Caco-2 (cell line): ENCODE measurements at regions of chr11 and their contacts with region 1.

Region 1: GRCh38 chr11:35485656-35486322 is 39.6 kb downstream of the PAMR1 start:
- DNase-seq: peak; percentile 80 to 86
- H3K4me3 ChIP-seq: no peak overlapping the region
- H3K4me3 Mint-ChIP-seq: no peak overlapping the region
- H3K27ac Mint-ChIP-seq: no peak overlapping the region
- H3K4me1 ChIP-seq: no peaks in the 10 kb centered on the region
- H3K4me1 Mint-ChIP-seq: no peaks in the 10 kb centered on the region
- H3K27me3 ChIP-seq: no peaks in the 10 kb centered on the region
- H3K27me3 Mint-ChIP-seq: no peaks in the 10 kb centered on the region
- CTCF ChIP-seq: peak; percentile 87 to 96

Region 2: DNA sequence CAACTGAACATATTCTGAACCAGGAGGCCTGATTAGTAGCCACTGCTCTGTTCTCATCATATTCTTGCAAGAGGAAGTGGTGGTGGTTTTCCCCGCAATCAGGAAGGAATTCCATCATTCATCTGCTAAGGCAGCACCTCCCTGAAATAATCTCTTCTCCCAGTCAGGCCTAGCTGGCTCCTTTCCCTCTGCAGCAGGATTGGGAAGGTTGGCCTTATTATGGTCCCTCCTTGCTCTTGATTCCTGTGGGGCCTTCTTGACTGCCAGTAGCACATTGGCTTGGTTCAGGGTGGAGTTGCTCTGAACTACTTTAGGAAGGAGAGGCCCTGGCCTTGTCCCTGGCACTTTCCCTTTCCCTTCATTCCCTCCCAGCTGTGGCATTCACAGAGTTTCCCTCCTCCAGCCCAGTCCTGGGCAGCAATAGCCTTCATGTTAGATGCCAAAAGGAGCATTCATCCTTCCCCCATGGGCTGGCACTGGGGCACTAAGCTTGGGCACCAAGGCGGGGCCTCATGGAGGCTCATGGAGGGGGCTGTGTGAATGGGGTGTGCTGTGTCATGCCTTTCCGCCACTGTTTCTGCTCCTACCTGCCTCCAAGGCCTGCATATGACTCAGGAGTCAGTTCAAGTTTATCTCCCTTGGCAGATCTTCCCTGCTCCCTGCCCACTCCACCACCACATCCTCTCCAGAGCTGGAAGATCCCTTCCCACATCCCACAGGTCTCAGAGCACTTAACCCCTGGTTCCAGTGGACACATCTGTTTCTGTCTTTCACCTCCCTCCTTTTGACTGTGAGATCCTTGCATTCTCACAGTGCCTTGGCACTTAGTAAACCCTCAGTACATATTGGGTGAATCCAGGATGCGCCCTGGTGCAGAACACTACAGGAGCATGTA is 374.4 kb before region 1 on chr11:
- CTCF ChIA-PET with region 1: no interaction called
- POLR2A ChIA-PET with region 1: no interaction called
- intact Hi-C with region 1: no loop called
- DNase-seq: no peak
- H3K4me3 ChIP-seq: no peak overlapping the region
- H3K4me3 Mint-ChIP-seq: no peak overlapping the region
- H3K27ac Mint-ChIP-seq: no peak overlapping the region
- H3K4me1 ChIP-seq: no peaks in the 10 kb centered on the region
- H3K4me1 Mint-ChIP-seq: no peaks in the 10 kb centered on the region
- H3K27me3 ChIP-seq: no peaks in the 10 kb centered on the region; the same call in 1 of the 2 replicates
- H3K27me3 Mint-ChIP-seq: peaks cover 2% of the 10 kb centered on the region
- CTCF ChIP-seq: no peak

Region 3: GRCh38 chr11:35235936-35236666 is 249.7 kb before region 1 on chr11:
- CTCF ChIA-PET with region 1: no interaction called
- POLR2A ChIA-PET with region 1: no interaction called
- intact Hi-C with region 1: no loop called
- DNase-seq: no peak
- H3K4me3 ChIP-seq: no peak overlapping the region
- H3K4me3 Mint-ChIP-seq: no peak overlapping the region
- H3K27ac Mint-ChIP-seq: no peak overlapping the region
- H3K4me1 ChIP-seq: peaks cover 4% of the 10 kb centered on the region; the same call in 1 of the 2 replicates
- H3K4me1 Mint-ChIP-seq: peaks cover 8% of the 10 kb centered on the region
- H3K27me3 ChIP-seq: no peaks in the 10 kb centered on the region
- H3K27me3 Mint-ChIP-seq: no peaks in the 10 kb centered on the region
- CTCF ChIP-seq: no peak

Region 4: GRCh38 chr11:35461917-35462538 is 23.8 kb before region 1 on chr11:
- CTCF ChIA-PET with region 1: no interaction called
- POLR2A ChIA-PET with region 1: interaction called, 3 read pairs
- intact Hi-C with region 1: loop called (anchors 2 kb)
- DNase-seq: no peak
- H3K4me3 ChIP-seq: no peak overlapping the region
- H3K4me3 Mint-ChIP-seq: no peak overlapping the region
- H3K27ac Mint-ChIP-seq: no peak overlapping the region
- H3K4me1 ChIP-seq: no peaks in the 10 kb centered on the region
- H3K4me1 Mint-ChIP-seq: no peaks in the 10 kb centered on the region
- H3K27me3 ChIP-seq: no peaks in the 10 kb centered on the region; the same call in 1 of the 2 replicates
- H3K27me3 Mint-ChIP-seq: peaks cover 3% of the 10 kb centered on the region
- CTCF ChIP-seq: no peak

Region 5: GRCh38 chr11:36265793-36266628 is 780.2 kb after region 1 on chr11:
- CTCF ChIA-PET with region 1: no interaction called
- POLR2A ChIA-PET with region 1: no interaction called
- intact Hi-C with region 1: loop called (anchors 5 kb)
- DNase-seq: peak; percentile 54 to 75
- H3K4me3 ChIP-seq: no peak overlapping the region
- H3K4me3 Mint-ChIP-seq: no peak overlapping the region
- H3K27ac Mint-ChIP-seq: no peak overlapping the region
- H3K4me1 ChIP-seq: no peaks in the 10 kb centered on the region
- H3K4me1 Mint-ChIP-seq: peaks cover 6% of the 10 kb centered on the region
- H3K27me3 ChIP-seq: no peaks in the 10 kb centered on the region
- H3K27me3 Mint-ChIP-seq: no peaks in the 10 kb centered on the region
- CTCF ChIP-seq: peak; percentile 91 to 92